Colonic mucosa (tissue), 4 donors: ENCODE measurements at regions of chr6 and their contacts with region 1.

Region 1: DNA sequence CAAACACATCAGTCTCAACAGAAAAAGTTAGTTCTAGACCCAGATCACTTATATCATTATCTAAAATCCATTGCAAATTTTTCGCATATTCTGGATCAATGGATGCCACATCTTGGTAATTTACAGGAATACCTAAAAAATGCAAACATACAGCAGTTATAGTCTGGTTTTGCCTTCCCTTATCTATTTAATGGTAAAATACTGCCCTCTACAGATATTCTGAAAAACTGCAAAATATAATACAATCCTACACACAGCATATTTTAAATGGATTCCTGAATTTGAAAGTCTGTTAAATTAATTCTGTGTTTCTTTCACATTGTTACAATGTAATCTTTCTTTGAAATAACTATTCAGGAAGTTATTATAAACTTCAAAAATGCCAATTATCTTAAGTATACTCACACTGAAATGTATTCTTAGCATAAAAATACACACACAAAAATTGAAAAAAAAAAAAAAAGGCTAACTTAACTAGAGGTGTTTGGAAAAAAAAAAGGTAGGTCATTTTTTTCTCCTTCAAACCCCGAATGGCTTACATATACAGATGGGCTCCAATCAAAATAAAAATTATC is 88.4 kb downstream of the HACE1 start:
- DNase-seq: no peak
- H3K4me3 ChIP-seq: no peak overlapping the region
- H3K27ac ChIP-seq: no peak overlapping the region
- H3K4me1 ChIP-seq: no peaks in the 10 kb centered on the region
- H3K27me3 ChIP-seq: no peaks in the 10 kb centered on the region
- CTCF ChIP-seq: peak; percentile 33

Region 2: GRCh38 chr6:104525677-104526312 is 245.6 kb before region 1 on chr6:
- intact Hi-C with region 1: loop called (anchors 5 kb)
- DNase-seq: peak; percentile 69
- H3K4me3 ChIP-seq: no peak overlapping the region
- H3K27ac ChIP-seq: no peak overlapping the region
- H3K4me1 ChIP-seq: no peaks in the 10 kb centered on the region
- H3K27me3 ChIP-seq: no peaks in the 10 kb centered on the region
- CTCF ChIP-seq: peak; percentile 86

Region 3: GRCh38 chr6:104682722-104683643 is 88.4 kb before region 1 on chr6:
- intact Hi-C with region 1: no loop called
- DNase-seq: peak; percentile 45
- H3K4me3 ChIP-seq: no peak overlapping the region
- H3K27ac ChIP-seq: no peak overlapping the region
- H3K4me1 ChIP-seq: no peaks in the 10 kb centered on the region
- H3K27me3 ChIP-seq: no peaks in the 10 kb centered on the region
- CTCF ChIP-seq: peak; percentile 34